GM10248 (cell line): ENCODE measurements at regions of chr10 and their contacts with region 1.

Region 1: GRCh38 chr10:95363303-95363912 is 72.6 kb upstream of the PDLIM1 start:
- DNase-seq: peak; percentile 71
- CTCF ChIP-seq: peak; percentile 84

Region 2: DNA sequence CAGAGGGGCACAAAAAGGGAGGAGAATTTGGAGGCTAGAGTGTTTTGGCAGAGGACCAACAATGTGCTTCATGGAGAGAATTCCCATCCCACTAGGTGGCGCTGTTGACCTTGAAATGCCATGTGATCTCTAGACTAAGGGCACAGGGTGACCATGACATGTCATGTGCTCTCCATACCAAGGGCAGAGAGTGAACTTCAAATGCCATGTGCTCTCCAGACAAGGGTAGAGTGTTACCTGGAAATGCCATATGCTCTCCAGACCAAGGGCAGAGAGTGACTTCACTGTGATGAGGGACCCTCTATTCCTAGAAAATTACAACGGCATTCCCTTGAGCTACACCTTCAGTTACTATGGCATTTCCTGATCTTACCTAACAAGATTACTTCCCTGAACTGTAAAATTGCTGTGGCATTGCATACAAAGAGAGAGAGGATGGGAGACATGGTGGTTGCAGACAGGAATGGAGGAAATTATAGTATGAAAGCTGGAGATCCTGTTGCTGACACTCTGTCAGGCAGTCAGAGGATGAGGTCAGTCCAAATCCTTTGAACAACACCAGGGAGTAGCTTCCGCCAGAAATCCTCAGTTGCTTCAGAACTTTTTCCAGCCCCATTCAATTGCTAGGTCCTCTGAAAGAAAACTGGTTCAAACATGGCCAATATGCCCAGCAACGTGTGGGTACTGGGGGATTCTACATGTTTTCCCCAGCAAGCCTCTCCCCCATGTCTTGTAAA is 230.2 kb before region 1 on chr10:
- CTCF ChIA-PET with region 1: interaction called, 57 read pairs
- POLR2A ChIA-PET with region 1: no interaction called
- DNase-seq: peak; percentile 52
- CTCF ChIP-seq: peak; percentile 75

Region 3: DNA sequence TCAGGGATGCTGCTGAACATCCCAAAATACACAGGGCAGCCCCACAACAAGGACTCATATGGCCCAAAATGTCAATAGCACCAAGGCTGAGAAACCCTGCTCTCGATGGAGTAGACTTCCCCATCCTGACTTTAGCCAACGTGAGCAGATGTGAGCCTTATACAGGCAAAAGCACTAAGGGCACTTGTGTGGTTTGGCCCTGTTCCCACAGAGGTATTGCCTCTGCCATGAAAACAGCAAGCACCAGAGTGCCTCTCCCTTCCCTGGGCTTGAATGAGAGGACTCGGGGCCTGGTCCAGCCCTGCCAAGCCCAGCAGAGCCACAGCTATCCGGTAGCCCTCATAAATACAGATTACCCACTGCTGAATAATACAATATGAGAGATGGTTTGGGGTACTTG is 121.9 kb before region 1 on chr10:
- CTCF ChIA-PET with region 1: interaction called, 277 read pairs
- POLR2A ChIA-PET with region 1: no interaction called
- DNase-seq: no peak
- CTCF ChIP-seq: no peak

Region 4: DNA sequence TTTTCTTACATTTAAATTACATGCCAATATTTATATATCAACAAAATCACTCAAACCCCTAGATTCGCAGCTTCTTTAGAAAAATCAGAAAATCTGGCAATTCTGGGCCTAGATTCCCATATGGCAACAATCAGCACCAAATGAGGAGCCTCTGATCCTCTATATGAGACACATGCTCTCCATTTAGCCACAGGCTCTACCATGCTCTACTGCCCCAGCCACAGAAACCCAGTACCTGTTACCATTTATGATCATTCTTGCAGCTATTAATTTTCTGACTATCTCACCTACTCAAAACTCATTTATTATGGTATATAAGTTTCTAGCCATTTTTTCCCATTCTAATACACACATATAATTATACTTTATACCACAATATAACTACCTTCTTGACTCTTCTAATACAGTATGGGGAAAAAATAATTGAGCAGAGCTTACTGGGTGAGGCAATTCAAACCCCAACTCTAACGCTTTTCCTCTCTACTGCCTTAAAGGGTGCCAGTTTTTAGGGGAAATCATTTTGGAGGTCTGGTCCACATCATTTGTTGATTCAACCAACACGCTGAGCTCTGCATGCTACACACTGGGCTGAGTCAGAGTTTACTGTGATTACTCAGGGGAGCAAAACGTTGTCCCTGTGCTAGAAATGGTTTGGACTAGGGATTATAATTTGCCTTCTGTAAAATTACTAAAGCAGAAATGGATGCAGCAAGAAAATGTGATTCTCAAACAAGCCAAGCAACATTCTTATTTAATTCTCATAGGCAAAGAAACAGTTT is 84.2 kb before region 1 on chr10:
- CTCF ChIA-PET with region 1: interaction called, 47 read pairs
- POLR2A ChIA-PET with region 1: interaction called, 4 read pairs
- DNase-seq: no peak
- CTCF ChIP-seq: no peak

Region 5: GRCh38 chr10:95350219-95350829 is 13.1 kb before region 1 on chr10:
- CTCF ChIA-PET with region 1: interaction called, 137 read pairs
- POLR2A ChIA-PET with region 1: no interaction called
- DNase-seq: no peak
- CTCF ChIP-seq: no peak

Region 6: GRCh38 chr10:95404462-95404858 is 41.1 kb after region 1 on chr10:
- CTCF ChIA-PET with region 1: no interaction called
- POLR2A ChIA-PET with region 1: no interaction called
- DNase-seq: no peak
- CTCF ChIP-seq: no peak

Region 7: DNA sequence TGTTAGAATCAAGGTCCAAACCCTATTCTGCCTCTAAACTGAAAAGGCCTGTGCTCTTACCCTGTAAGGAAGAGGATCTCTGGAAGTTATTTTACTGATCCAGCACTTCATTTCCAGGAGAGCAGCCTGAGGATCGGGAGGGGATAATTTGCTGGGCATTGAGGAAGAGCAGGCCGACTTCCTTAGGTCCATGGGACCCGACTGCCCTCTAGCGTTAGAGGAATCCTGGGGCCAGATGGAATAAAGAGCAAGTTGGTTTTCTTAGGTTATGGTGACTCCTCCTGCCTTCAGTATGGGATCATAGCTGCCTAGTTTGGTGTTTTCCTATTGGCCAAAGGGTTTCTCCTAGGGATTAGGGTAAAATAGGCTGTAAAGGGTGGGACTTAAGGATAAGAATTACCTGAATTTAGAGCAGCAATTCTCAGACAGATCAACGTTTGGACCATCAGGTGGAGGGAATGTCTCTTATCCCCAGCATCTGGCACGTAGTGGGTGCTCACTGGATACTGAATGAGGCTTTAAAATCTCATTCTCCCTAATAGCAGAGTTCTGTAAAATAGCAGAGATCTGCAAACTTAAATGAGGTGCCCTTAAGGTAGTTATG is 237.8 kb after region 1 on chr10:
- CTCF ChIA-PET with region 1: interaction called, 13 read pairs
- POLR2A ChIA-PET with region 1: no interaction called
- DNase-seq: peak; percentile 67
- CTCF ChIP-seq: peak; percentile 87